Dorsolateral prefrontal cortex (tissue), 120 donors: ENCODE measurements at regions of chr5 and their contacts with region 1.

Region 1: GRCh38 chr5:142888469-142889085 is 118.4 kb downstream of the ARHGAP26 start:
- DNase-seq: peak in 1 of 10 donors; percentile 39
- H3K4me3 ChIP-seq: no peak overlapping the region
- H3K27ac ChIP-seq: peak overlapping the region in 5 of 59 donors; percentile 14 to 45 (median 19)
- H3K27me3 ChIP-seq: no peaks in the 10 kb centered on the region
- CTCF ChIP-seq: peak; percentile 73 to 92 (median 84)

Region 2: GRCh38 chr5:142151436-142152383 is 736.9 kb before region 1 on chr5:
- intact Hi-C with region 1: loop called in 1 of 2 experiments (anchors 10 kb)
- DNase-seq: peak in 4 of 10 donors; percentile 20 to 67 (median 42)
- H3K4me3 ChIP-seq: no peak overlapping the region
- H3K27ac ChIP-seq: no peak overlapping the region
- H3K27me3 ChIP-seq: no peaks in the 10 kb centered on the region
- CTCF ChIP-seq: peak; percentile 68 to 96 (median 82)

Region 3: DNA sequence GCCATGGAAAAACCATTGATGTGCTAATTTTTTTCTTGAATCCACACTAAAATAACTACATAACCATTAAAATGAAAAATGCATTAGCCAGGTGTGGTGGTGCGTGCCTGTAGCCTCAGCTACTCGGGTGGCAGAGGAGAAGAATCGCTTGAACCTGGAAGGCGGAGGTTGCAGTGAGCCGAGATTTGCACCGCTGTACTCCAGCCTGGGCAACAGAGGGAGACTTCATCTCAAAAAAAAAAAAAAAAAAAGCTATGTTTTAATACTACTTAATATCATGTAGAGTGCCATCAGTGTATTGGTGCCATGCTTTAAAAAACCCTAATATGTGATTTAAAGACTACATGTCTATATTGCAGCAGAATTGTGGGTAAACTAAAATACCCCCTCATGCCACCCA is 721.1 kb before region 1 on chr5:
- intact Hi-C with region 1: loop called in 1 of 2 experiments (anchors 10 kb)
- DNase-seq: no peak
- H3K4me3 ChIP-seq: no peak overlapping the region
- H3K27ac ChIP-seq: no peak overlapping the region
- H3K27me3 ChIP-seq: no peaks in the 10 kb centered on the region
- CTCF ChIP-seq: no peak

Region 4: DNA sequence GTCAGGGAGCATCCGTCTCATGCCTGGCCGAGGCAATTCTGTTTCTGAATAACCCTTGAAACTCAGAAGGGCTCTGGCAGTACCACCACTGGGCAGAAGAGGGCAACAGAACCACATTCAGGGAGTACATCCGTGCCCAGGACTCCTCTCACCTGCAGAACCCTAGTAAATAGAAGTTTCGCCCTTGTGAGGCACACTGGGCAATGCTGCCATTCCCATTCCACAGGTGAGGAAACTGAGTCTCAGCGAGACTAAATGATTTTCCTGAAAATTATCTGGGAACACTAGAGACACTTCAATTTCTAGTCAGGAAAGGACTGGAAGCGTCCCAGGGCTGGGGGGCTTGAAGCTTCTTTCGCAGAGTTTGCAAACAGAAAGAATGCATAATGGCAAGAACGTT is 277.4 kb before region 1 on chr5:
- intact Hi-C with region 1: loop called in 1 of 2 experiments (anchors 10 kb)
- DNase-seq: peak; percentile 53 to 87 (median 75)
- H3K4me3 ChIP-seq: no peak overlapping the region
- H3K27ac ChIP-seq: peak overlapping the region in 16 of 59 donors; percentile 5 to 67 (median 39)
- H3K27me3 ChIP-seq: no peaks in the 10 kb centered on the region
- CTCF ChIP-seq: peak; percentile 65 to 92 (median 85)

Region 5: GRCh38 chr5:143066556-143067281 is 178.1 kb after region 1 on chr5:
- intact Hi-C with region 1: no loop called
- DNase-seq: no peak
- H3K4me3 ChIP-seq: no peak overlapping the region
- H3K27ac ChIP-seq: peak overlapping the region in 47 of 59 donors; percentile 11 to 89 (median 77)
- H3K27me3 ChIP-seq: no peaks in the 10 kb centered on the region
- CTCF ChIP-seq: no peak